CD8-positive, alpha-beta T cell (primary cell): ENCODE measurements at regions of chr10 and their contacts with region 1.

Region 1: DNA sequence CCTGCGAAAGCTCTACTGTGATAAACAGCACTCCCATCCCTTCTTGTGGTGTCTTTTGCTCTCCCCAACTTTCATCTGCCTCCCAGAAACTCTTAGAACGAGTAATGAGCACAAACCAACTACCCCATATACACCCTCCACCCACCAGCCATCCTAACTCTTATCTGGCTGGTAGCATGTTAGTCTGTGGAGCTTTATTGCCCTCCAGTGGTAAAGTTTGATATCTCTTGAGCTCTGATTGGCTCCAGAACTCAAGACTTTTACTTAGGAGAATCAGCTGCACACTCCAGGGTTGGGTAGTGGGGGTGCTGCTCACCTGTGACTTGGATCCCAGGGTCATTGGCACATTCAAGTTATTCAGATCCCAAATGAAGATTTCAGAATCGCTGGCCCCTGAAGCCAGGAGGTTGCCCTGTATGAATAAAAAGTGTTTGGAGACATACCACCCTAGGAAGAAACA is 10.9 kb downstream of the SEC31B start:
- DNase-seq: peak in 6 of 9 experiments; percentile 40 to 85 (median 50)
- ATAC-seq: peak; percentile 45
- H3K4me3 ChIP-seq: peak overlapping the region in 1 of 2 experiments; percentile 10
- H3K4me3 Mint-ChIP-seq: peak overlapping the region; percentile 66
- H3K27ac ChIP-seq: peak overlapping the region; percentile 25 to 62
- H3K27ac Mint-ChIP-seq: peak overlapping the region; percentile 94
- H3K4me1 ChIP-seq: peaks cover 63% of the 10 kb centered on the region
- H3K4me1 Mint-ChIP-seq: peaks cover 73% of the 10 kb centered on the region
- H3K27me3 ChIP-seq: no peaks in the 10 kb centered on the region
- H3K27me3 Mint-ChIP-seq: no peaks in the 10 kb centered on the region
- CTCF ChIP-seq: peak; percentile 76

Region 2: DNA sequence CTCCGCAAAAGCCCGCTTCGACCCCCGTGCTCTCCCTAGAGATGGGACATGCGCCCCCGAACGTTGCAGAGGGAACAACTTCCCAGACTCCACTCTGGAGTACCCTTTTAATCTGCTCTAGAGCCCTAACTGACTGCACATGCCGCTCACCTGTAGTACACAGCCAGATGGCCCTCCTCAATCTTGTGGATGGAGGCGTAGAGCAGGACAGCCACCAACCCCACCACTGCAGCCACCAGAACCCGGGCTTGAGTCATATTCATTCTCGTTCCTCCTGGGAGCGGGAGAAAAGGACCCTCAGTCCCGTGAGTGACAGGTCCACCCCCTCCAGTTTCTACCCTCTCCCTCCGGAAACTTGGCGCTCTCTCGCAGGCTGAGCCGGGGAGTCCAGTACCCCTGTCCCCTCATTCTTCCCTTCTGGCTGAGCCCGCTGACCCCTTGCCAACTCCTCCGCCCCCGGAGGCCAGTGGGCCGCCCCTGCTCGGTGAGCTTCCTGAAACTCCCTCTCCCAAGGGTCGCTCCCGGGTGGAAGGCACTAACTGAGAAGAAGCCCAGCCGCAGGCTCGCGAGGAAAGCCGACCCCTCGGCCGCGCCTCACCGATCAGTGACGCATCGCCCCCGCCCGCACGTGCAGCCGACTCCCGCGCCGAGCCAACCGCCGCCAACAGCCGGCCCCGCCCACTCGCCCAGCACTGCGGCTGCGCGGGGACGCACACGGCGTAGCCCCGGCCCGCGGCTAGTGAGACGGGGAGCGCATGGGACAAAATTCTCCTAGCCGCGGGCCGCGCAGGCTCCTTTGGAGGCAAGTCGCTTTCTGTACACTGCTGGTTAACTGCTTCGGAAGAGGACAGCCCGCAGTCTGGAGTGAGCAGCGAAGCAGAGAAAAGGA is 323.1 kb before region 1 on chr10 and contains the start of gene ERLIN1:
- CTCF ChIA-PET with region 1: no interaction called
- POLR2A ChIA-PET with region 1: no interaction called
- intact Hi-C with region 1: loop called in 1 of 2 experiments (anchors 5 kb)
- DNase-seq: peak; percentile 78 to 95 (median 91)
- ATAC-seq: peak; percentile 93
- H3K4me3 ChIP-seq: peak within 1 kb of the TSS; percentile 68 to 96
- H3K4me3 Mint-ChIP-seq: peak within 1 kb of the TSS; percentile 98
- H3K27ac ChIP-seq: peak within 1 kb of the TSS; percentile 85 to 89
- H3K27ac Mint-ChIP-seq: peak within 1 kb of the TSS; percentile 95
- H3K4me1 ChIP-seq: peaks cover 24% of the 10 kb centered on the region
- H3K4me1 Mint-ChIP-seq: peaks cover 64% of the 10 kb centered on the region
- H3K27me3 ChIP-seq: no peaks in the 10 kb centered on the region
- H3K27me3 Mint-ChIP-seq: no peaks in the 10 kb centered on the region
- CTCF ChIP-seq: no peak
- total RNA-seq, gene ERLIN1: 2.0 to 3.1 TPM

Region 3: DNA sequence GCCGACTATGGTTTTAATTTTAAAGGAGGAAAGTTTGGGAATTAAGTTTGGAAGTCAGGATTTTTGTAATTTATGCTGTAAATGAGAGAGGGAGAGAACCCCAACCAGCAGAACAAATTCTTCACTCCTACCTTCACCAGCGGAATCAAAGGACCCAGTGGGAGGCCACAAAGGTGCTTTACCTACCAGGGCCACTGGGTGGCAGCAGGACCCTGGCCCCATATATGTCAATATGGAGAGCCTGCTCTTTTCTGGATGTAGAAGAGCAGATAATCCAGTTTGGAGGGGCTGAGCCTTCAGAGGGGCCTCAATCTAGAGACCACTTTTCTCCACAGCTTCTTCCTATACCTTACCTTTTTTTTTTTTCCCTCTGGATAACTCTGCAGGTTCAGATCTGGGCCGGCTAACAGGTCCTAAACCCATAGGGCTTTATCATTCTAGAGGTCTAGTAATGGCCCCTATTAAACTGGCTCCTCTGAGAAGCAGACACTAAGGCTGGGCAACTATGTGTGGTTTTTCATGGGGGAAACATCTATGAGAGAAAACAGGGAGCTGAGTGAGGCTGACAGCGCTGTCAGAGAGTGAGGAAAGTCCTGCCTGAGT is 170.2 kb before region 1 on chr10:
- CTCF ChIA-PET with region 1: interaction called, 113 read pairs
- POLR2A ChIA-PET with region 1: no interaction called
- intact Hi-C with region 1: loop called (anchors 1 kb)
- DNase-seq: peak; percentile 67 to 86 (median 81)
- ATAC-seq: peak; percentile 93
- H3K4me3 ChIP-seq: no peak overlapping the region
- H3K4me3 Mint-ChIP-seq: no peak overlapping the region
- H3K27ac ChIP-seq: no peak overlapping the region
- H3K27ac Mint-ChIP-seq: no peak overlapping the region
- H3K4me1 ChIP-seq: no peaks in the 10 kb centered on the region
- H3K4me1 Mint-ChIP-seq: no peaks in the 10 kb centered on the region
- H3K27me3 ChIP-seq: no peaks in the 10 kb centered on the region
- H3K27me3 Mint-ChIP-seq: peaks cover 5% of the 10 kb centered on the region
- CTCF ChIP-seq: peak; percentile 77

Region 4: DNA sequence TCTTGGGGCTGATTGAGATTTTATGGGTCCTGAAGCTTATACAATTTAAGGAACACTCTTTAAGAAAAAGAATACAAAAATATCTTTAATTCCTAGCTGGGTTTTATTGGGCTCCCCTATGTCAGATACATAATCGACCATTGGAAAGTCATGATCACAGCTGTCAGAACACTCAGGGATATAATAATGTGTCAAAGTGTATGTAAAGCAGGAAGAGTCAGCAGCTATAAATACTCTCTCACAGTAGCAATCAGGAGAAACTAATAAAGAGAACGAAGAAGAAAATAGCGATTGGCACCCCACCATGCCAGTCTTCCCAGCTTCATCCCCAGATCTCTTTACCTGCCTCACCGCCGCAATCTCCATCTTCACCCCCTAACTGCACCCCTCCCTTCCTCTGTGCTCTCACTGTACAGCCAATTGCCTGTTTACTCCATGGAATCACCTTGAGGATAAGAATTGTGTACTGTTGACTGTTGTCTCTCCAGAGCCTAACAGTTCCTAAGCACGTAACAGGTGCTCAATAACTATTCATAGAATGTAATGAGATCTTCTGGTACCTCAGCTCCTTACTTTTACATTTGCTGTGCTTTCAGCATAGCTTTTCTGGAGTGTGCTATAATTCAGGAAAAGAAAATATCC is 69.9 kb before region 1 on chr10:
- CTCF ChIA-PET with region 1: interaction called, 298 read pairs
- POLR2A ChIA-PET with region 1: no interaction called
- intact Hi-C with region 1: loop called (anchors 1 kb)
- DNase-seq: no peak
- ATAC-seq: no peak
- H3K4me3 ChIP-seq: no peak overlapping the region
- H3K4me3 Mint-ChIP-seq: no peak overlapping the region
- H3K27ac ChIP-seq: no peak overlapping the region
- H3K27ac Mint-ChIP-seq: no peak overlapping the region
- H3K4me1 ChIP-seq: no peaks in the 10 kb centered on the region
- H3K4me1 Mint-ChIP-seq: peaks cover 2% of the 10 kb centered on the region
- H3K27me3 ChIP-seq: no peaks in the 10 kb centered on the region
- H3K27me3 Mint-ChIP-seq: no peaks in the 10 kb centered on the region
- CTCF ChIP-seq: no peak

Region 5: DNA sequence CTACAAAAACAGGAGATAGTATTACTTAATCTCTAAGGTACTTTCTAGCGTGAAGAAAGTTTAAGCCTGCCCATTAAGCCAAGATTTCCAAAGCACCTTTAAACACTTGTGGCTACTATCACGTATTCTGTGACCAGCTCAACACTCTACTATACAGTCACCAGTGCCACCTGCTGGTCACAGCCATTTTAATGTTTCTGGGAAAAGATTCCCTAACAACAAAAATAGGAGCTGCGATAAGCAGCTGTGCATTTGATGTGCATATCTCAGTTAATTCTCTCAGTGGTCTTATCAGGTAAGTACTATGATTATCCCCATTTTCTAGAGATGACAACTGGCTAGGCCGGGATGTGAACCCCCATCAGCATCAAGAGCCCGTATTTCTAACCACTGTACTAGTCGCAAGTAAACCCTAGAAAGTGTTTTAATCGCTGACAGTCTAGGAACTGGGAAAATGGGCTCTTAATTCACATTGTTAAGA is 10.1 kb after region 1 on chr10:
- CTCF ChIA-PET with region 1: interaction called, 133 read pairs
- POLR2A ChIA-PET with region 1: interaction called, 10 read pairs
- intact Hi-C with region 1: loop called in 1 of 2 experiments (anchors 1 kb)
- DNase-seq: peak; percentile 25 to 75 (median 67)
- ATAC-seq: peak; percentile 86
- H3K4me3 ChIP-seq: no peak overlapping the region
- H3K4me3 Mint-ChIP-seq: no peak overlapping the region
- H3K27ac ChIP-seq: no peak overlapping the region
- H3K27ac Mint-ChIP-seq: no peak overlapping the region
- H3K4me1 ChIP-seq: peaks cover 11% of the 10 kb centered on the region
- H3K4me1 Mint-ChIP-seq: peaks cover 21% of the 10 kb centered on the region
- H3K27me3 ChIP-seq: no peaks in the 10 kb centered on the region
- H3K27me3 Mint-ChIP-seq: no peaks in the 10 kb centered on the region
- CTCF ChIP-seq: peak; percentile 90

Region 6: GRCh38 chr10:100535715-100536353 is 27.1 kb after region 1 on chr10 and contains the start of gene HIF1AN:
- CTCF ChIA-PET with region 1: interaction called, 22 read pairs
- POLR2A ChIA-PET with region 1: interaction called, 7 read pairs
- intact Hi-C with region 1: no loop called
- DNase-seq: peak; percentile 73 to 97 (median 88)
- ATAC-seq: peak; percentile 99
- H3K4me3 ChIP-seq: peak within 1 kb of the TSS; percentile 59 to 82
- H3K4me3 Mint-ChIP-seq: no peak within 1 kb of the TSS
- H3K27ac ChIP-seq: peak within 1 kb of the TSS; percentile 55 to 75
- H3K27ac Mint-ChIP-seq: no peak within 1 kb of the TSS
- H3K4me1 ChIP-seq: peaks cover 29% of the 10 kb centered on the region
- H3K4me1 Mint-ChIP-seq: peaks cover 19% of the 10 kb centered on the region
- H3K27me3 ChIP-seq: no peaks in the 10 kb centered on the region
- H3K27me3 Mint-ChIP-seq: no peaks in the 10 kb centered on the region
- CTCF ChIP-seq: peak; percentile 92
- total RNA-seq, gene HIF1AN: 28.0 to 31.2 TPM